Posterior cingulate gyrus (tissue), 11 donors: ENCODE measurements at regions of chr7 and their contacts with region 1.

Region 1: DNA sequence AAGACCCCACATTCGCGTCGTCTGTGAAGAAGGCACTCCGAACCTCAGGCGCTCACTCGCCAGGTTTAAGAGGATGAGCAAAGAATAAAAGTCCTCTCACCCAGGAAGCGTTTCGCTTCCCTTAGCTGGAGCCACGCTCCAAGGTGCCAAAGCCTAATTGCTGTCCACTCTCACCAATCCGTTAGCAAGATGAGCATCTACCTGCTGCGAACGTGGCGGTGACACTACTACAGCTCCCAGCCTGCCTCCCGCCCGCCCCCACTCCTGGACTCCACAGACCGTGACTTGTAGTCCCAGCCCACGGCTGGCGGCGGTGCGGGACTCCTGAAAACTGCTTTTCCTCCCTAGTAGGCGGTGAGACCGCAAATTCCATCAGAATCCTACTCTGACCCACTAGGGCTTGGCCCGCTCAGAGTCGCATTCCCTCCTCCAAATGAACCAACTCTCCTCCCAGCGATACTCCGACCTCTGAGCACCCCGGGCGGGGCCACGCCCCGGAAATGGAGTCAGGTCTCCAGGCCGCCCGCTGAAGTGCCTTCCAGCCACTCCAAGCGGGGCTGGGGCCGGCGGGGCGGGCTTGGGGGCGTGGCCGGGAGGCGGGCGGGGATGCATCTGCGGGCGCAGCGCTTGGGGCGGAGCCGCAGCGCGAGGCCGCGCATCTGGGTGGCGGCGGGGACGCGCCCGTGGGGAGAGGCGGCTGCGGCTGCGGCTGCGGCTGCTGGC is 521 bp upstream of the PTPN12 start:
- DNase-seq: peak; percentile 96 to 100 (median 98)

Region 2: GRCh38 chr7:77450054-77450453 is 86.5 kb before region 1 on chr7:
- intact Hi-C with region 1: loop called (anchors 2 kb)
- DNase-seq: no peak

Region 3: GRCh38 chr7:77696198-77697028 is 159.8 kb after region 1 on chr7 and contains the start of gene RSBN1L:
- intact Hi-C with region 1: loop called (anchors 2 kb)
- DNase-seq: peak; percentile 98 to 100 (median 99)

Region 4: GRCh38 chr7:77798394-77799077 is 262.0 kb after region 1 on chr7 and contains the starts of genes PHTF2 and TMEM60:
- intact Hi-C with region 1: loop called (anchors 5 kb)
- DNase-seq: peak; percentile 97 to 100 (median 99)

Region 5: GRCh38 chr7:77855371-77856083 is 319.0 kb after region 1 on chr7:
- intact Hi-C with region 1: no loop called
- DNase-seq: peak in 9 of 10 donors; percentile 13 to 94 (median 56)